GM10248 (cell line): ENCODE measurements at regions of chr20 and their contacts with region 1.

Region 1: GRCh38 chr20:35063168-35063567 is 29.4 kb downstream of the TRPC4AP start:
- DNase-seq: no peak
- CTCF ChIP-seq: no peak

Region 2: GRCh38 chr20:35077341-35077740 is 14.2 kb after region 1 on chr20:
- CTCF ChIA-PET with region 1: interaction called, 11 read pairs
- POLR2A ChIA-PET with region 1: no interaction called
- DNase-seq: no peak
- CTCF ChIP-seq: no peak